ENCODE measurements at regions of chr3 and their contacts with region 1.

Region 1: GRCh38 chr3:189041482-189042090 is 130.2 kb upstream of the TPRG1 start:
- DNase-seq: peak; percentile 86
- H3K4me3 Mint-ChIP-seq: no peak overlapping the region
- H3K27ac Mint-ChIP-seq: peak overlapping the region; percentile 35
- H3K4me1 Mint-ChIP-seq: peaks cover 47% of the 10 kb centered on the region
- H3K27me3 Mint-ChIP-seq: no peaks in the 10 kb centered on the region

Region 2: DNA sequence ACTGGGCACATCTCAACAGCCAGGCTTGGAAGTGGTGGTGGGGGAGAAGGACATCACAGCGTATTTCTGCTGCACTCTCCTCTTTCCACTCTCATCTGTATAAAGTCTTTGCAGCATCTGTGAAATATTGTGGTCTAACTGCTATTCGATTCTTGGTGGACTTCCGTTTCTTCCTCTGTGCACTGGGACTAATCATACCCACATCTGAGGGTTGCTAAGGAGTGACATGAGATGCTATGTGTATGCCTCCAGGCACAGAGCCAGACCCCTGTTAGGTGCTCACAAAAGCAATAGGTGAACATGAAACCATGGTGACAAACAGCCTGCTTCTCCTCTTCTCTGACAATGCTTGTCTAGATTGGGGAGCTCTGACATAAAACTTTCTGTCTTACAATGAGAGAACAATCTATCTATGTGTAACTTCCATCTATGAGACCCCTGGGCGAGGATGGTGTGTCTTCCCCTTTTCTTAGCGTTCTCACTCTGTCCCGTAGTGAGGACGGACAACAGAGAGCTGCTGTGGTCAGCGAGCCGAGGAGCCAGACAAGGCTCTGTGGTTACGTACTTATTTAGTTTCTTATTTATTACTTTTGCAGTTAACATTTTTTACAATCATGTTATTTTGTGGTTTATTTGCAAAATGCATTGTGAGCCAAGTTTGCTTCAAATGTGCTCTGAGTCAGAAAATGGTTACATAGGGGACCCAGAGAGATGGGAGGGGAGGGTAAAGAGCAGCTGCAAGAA is 66.6 kb before region 1 on chr3:
- CTCF ChIA-PET with region 1: interaction called, 17 read pairs
- DNase-seq: no peak
- H3K4me3 Mint-ChIP-seq: no peak overlapping the region
- H3K27ac Mint-ChIP-seq: no peak overlapping the region
- H3K4me1 Mint-ChIP-seq: peaks cover 34% of the 10 kb centered on the region
- H3K27me3 Mint-ChIP-seq: peaks cover 9% of the 10 kb centered on the region

Region 3: DNA sequence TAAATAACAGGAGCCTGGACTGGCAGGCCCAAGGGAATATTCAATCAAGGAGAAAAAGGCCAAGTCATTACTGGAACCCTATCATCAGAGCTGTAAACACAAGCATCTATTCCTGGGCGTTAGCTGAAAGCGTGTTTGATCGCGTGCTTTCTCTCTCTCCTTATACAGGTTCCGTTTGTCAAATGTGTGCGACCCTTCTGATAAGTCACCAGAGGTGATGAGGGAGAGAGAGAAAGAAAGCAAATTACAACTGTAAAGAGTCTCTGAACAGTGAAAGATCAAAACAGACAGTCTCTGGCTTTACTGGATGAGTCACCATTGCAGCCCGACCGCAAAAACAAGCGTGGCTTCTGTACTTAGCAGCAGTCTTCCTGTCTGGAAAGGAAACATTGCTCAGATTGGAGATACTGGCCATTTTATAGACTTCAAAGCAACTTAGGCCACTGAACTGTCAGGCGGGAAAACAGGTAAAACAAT is 90.7 kb after region 1 on chr3:
- CTCF ChIA-PET with region 1: interaction called, 11 read pairs
- DNase-seq: peak; percentile 89
- H3K4me3 Mint-ChIP-seq: peak overlapping the region; percentile 6
- H3K27ac Mint-ChIP-seq: peak overlapping the region; percentile 96
- H3K4me1 Mint-ChIP-seq: peaks cover 29% of the 10 kb centered on the region
- H3K27me3 Mint-ChIP-seq: no peaks in the 10 kb centered on the region

Region 4: DNA sequence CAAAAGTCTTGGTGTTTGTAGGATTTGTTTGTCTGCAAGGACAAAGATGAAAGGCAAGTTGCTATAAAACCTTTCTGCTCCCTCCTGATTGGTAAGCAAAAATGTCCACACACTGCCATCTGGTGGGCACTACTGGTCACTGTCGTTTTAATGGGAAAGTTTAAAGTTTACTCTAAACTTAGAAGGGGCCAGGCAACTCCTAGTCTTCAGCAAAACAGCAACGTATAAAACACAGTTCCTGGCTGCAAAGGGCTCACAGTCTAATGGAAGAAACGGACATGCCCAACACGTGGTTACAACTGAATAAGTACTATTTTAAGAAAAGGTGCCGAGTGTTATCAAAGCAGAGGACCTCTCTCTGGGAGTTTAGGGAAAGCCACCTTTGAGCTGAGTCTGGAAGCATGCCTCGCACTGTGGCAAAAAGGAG is 106.5 kb after region 1 on chr3:
- CTCF ChIA-PET with region 1: interaction called, 33 read pairs
- DNase-seq: peak; percentile 79
- H3K4me3 Mint-ChIP-seq: no peak overlapping the region
- H3K27ac Mint-ChIP-seq: no peak overlapping the region
- H3K4me1 Mint-ChIP-seq: peaks cover 37% of the 10 kb centered on the region
- H3K27me3 Mint-ChIP-seq: peaks cover 7% of the 10 kb centered on the region

Measured in activated naive CD4-positive, alpha-beta T cell treated with anti-CD3 and anti-CD28 coated beads, Interleukin-2, amount 10 ng/mL, durations not matched to agents 7 days and 5 days (primary cell).